ENCODE measurements at regions of chr10 and their contacts with region 1.

Region 1: DNA sequence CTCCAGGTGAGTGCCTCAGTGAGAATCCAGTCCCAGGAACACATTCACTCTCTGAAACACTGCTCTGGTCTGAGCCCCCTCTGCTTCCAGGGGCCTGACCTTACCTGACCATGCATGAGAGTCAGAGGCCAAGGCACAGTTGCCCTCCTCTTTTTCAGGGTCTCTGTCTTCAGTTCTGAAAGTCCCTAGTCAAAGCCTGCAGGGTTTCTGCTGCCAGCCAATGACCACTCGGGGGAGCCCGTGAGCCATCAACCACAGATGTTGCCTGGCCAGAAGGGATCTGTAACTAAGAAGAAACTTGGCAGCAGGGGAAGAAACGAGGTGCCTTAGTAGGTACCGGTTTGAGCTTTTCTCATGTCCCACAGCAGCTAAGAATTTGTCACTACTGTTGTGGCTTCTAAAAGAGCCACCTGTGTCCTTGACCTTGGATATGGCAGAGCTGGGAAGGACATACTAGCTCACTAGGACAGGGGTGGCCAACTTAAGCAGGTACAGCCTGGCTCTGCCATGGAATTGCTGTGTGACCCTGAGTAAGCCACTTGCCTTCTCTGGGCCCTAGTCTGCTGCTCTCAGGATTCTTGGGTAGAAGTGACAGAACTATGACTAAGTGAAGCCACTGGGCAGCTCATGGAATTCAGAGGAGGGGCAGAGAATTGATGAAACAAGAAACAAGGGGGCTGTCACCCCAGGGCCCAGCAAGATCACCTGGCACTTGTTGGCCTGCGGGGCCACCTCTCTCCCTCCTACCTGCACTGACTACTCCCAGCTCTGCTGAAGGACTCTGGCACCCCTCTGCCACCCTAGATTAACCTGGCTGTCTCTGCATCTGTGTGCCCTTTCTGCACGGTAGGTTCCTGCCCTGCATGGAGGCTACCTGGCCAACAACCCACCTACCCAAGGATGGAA is 83.8 kb upstream of the GPR26 start:
- DNase-seq: no peak
- H3K4me3 ChIP-seq: no peak overlapping the region
- H3K27me3 ChIP-seq: peaks cover 3% of the 10 kb centered on the region
- CTCF ChIP-seq: peak; percentile 96

Region 2: DNA sequence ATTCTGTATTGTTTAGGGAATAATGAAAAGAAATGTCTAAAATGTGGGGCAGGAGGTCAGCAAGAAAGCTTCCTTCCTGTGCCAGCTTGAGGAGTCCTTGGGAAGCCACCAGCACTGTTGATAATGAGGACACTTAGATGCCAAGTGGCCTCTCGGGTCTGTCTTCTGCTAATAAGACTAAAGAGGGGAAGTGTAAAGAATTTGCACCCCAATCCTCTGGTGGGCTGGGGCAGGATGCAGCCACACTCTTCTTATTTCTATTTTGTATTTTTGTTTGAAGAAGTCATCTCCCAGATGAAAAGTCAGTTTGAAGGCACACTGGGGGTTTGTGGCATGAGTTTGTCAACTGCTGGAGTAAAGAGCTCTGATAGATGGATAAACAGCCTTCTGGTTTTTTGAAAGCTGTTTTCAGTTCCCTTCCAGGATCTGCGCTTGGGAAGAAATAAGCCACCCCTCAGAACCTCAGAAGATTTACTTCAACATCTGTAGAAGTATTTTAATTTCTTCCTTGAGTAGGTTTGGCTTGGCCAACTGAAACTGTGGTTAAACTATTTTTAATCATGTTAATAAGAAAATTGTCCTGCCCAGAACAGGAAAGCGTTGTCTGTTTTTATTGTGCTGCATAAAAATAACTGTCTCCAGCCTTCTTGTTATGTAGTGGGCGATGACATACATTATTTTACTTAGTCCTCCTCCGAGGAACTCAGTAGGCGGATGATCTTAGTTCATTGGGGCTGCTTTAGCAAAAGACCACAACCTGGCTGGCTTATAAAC is 45.0 kb before region 1 on chr10:
- CTCF ChIA-PET with region 1: no interaction called
- POLR2A ChIA-PET with region 1: no interaction called
- DNase-seq: no peak
- H3K4me3 ChIP-seq: no peak overlapping the region
- H3K27me3 ChIP-seq: no peaks in the 10 kb centered on the region
- CTCF ChIP-seq: no peak

Region 3: DNA sequence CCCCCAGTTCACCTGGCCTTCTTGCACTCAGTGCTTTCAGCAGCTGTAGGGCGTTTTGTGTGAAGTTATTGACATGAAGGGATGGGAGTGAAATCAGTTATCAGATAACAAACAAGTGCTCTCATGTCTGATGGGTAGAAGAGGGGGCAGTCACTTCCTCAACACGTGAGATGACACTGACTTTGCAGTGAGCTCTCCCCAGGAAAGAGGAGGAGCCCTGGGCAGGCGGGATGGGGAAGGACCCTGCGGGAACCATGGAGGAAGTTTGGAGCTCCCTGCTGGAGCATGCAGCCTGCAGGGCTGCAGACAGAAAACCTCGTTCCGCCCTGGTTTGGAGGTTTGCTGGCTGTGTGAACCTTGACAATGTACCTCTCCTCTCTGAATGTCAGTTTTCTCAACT is 122.5 kb after region 1 on chr10:
- CTCF ChIA-PET with region 1: no interaction called
- POLR2A ChIA-PET with region 1: no interaction called
- DNase-seq: no peak
- H3K4me3 ChIP-seq: no peak overlapping the region
- H3K27me3 ChIP-seq: no peaks in the 10 kb centered on the region
- CTCF ChIP-seq: no peak

Region 4: GRCh38 chr10:123967396-123968243 is 385.3 kb after region 1 on chr10:
- CTCF ChIA-PET with region 1: interaction called, 179 read pairs
- POLR2A ChIA-PET with region 1: no interaction called
- DNase-seq: no peak
- H3K4me3 ChIP-seq: no peak overlapping the region
- H3K27me3 ChIP-seq: peaks cover 10% of the 10 kb centered on the region
- CTCF ChIP-seq: peak; percentile 93

Region 5: GRCh38 chr10:123974406-123974805 is 392.1 kb after region 1 on chr10:
- CTCF ChIA-PET with region 1: interaction called, 179 read pairs
- POLR2A ChIA-PET with region 1: no interaction called
- DNase-seq: no peak
- H3K4me3 ChIP-seq: no peak overlapping the region
- H3K27me3 ChIP-seq: peaks cover 13% of the 10 kb centered on the region
- CTCF ChIP-seq: no peak